Endothelial cell of umbilical vein (primary cell): ENCODE measurements at regions of chr11 and their contacts with region 1.

Region 1: DNA sequence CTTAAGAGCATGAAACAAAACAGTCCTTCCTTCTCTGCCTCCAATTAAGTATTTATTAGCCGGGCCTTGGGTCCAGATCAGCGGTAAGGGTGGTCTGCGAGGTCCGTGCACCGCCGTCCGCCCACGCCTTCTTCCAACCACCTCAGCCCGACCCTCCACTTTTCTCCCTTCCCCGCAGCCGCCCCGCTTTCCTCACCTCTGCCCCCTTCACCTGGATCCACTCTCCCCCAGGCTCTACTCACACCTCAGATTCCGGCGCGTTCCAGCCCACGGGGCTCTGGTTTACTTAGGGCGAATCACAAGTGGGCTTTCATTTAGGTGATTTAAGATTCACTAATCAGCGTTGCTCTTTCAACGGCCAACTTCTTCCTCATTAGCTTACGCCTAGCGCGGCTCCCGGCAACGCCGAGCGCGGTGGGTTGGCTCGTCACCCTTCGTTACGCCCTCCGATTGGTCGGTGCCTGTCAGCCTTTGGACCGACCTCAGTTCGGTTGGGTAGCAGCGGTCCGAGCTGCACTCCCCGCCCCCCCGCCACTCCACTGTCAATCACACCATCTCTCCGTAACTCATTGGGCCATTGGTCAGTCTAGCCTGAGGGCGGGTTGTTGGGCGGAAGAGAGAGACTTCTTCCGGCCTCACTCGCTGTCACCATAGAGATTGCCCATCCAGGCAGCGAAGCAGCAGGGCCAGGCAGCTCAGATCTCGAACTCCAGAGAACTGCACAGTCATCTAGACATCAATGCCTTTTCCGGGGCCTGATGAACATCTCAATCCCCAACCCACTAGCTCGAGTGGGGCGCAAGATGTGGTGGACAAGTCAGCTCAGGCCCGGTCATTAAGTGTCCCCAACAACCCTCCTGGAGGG is at the start of gene TMEM218:
- DNase-seq: peak; percentile 100
- H3K4me3 ChIP-seq: peak within 1 kb of the TSS; percentile 57 to 85 (median 72)
- H3K27ac ChIP-seq: peak within 1 kb of the TSS; percentile 10
- H3K4me1 ChIP-seq: peaks cover 6% of the 10 kb centered on the region
- H3K27me3 ChIP-seq: peaks cover 0 to 1% of the 10 kb centered on the region in 2 experiments
- CTCF ChIP-seq: no peak
- POLR2A ChIP-seq: no peak
- total RNA-seq, gene TMEM218: 17.9 and 23.8 TPM in 2 replicates

Region 2: DNA sequence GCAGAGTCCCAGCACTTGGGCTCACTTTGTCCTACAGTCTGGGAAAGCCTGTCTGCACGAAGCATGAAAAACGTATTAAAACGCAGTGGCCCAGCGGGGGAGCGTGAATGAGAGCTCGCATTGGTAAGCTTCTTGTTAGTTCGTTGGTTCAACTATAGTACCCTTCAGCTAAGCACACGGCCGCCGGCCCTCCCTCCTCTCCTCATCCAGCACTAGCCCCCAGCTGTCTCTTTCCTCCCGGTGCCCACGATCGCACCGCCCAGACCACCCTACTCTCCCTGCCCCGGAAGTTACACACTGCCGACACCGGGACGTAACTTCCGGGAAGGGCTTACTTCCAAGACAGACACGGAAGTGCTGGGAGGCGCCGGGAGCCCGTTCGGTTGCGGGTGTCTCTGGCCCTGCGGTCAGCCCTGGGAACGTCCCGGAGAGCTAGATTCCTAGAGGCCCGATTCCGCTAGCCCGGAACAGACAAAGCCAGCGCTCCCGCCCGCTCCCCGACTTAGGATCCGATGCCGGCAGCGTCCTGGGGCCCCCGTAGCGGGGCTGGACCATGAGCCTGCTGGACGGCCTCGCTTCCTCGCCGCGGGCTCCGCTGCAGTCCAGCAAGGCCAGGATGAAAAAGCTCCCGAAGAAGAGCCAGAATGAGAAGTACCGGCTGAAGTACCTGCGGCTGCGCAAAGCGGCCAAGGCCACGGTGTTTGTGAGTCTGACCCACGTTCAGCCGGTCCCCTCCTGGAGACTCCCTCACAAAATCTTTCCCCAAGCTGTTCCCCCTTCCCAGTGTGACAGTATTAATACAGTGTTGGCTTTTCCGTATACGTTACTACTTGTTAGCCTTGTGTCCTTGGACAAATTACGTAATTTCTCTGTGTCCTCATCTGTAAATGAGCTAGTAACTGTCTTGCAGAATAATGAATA is 488.8 kb before region 1 on chr11 and contains the start of gene TBRG1:
- CTCF ChIA-PET with region 1: no interaction called
- POLR2A ChIA-PET with region 1: no interaction called
- dilution Hi-C with region 1: no loop called
- intact Hi-C with region 1: loop called (anchors 5 kb)
- DNase-seq: peak; percentile 92
- H3K4me3 ChIP-seq: peak within 1 kb of the TSS; percentile 67 to 94 (median 74)
- H3K27ac ChIP-seq: peak within 1 kb of the TSS; percentile 87
- H3K4me1 ChIP-seq: peaks cover 19% of the 10 kb centered on the region
- H3K27me3 ChIP-seq: peaks cover 12 to 15% of the 10 kb centered on the region in 2 experiments
- CTCF ChIP-seq: no peak
- POLR2A ChIP-seq: peak; percentile 97
- total RNA-seq, gene TBRG1: 29.6 and 34.4 TPM in 2 replicates

Region 3: GRCh38 chr11:125062931-125063428 is 48.6 kb before region 1 on chr11 and contains the start of gene SLC37A2:
- CTCF ChIA-PET with region 1: no interaction called
- POLR2A ChIA-PET with region 1: no interaction called
- dilution Hi-C with region 1: no loop called
- intact Hi-C with region 1: loop called (anchors 2 kb)
- DNase-seq: peak; percentile 64
- H3K4me3 ChIP-seq: peak within 1 kb of the TSS; percentile 64 to 87 (median 74)
- H3K27ac ChIP-seq: no peak within 1 kb of the TSS
- H3K4me1 ChIP-seq: peaks cover 9% of the 10 kb centered on the region
- H3K27me3 ChIP-seq: no peaks in the 10 kb centered on the region
- CTCF ChIP-seq: peak; percentile 7 to 12
- POLR2A ChIP-seq: no peak
- total RNA-seq, gene SLC37A2: 1.1 and 1.3 TPM in 2 replicates

Region 4: GRCh38 chr11:125123947-125124617 is 12.5 kb after region 1 on chr11:
- CTCF ChIA-PET with region 1: interaction called, 15 read pairs
- POLR2A ChIA-PET with region 1: interaction called, 3 read pairs
- dilution Hi-C with region 1: no loop called
- intact Hi-C with region 1: no loop called
- DNase-seq: peak; percentile 46
- H3K4me3 ChIP-seq: no peak overlapping the region
- H3K27ac ChIP-seq: no peak overlapping the region
- H3K4me1 ChIP-seq: no peaks in the 10 kb centered on the region
- H3K27me3 ChIP-seq: peaks cover 15 to 16% of the 10 kb centered on the region in 2 experiments
- CTCF ChIP-seq: peak; percentile 37 to 57
- POLR2A ChIP-seq: no peak